Common myeloid progenitor, CD34-positive (primary cell): ENCODE measurements at regions of chr4 and their contacts with region 1.

Region 1: DNA sequence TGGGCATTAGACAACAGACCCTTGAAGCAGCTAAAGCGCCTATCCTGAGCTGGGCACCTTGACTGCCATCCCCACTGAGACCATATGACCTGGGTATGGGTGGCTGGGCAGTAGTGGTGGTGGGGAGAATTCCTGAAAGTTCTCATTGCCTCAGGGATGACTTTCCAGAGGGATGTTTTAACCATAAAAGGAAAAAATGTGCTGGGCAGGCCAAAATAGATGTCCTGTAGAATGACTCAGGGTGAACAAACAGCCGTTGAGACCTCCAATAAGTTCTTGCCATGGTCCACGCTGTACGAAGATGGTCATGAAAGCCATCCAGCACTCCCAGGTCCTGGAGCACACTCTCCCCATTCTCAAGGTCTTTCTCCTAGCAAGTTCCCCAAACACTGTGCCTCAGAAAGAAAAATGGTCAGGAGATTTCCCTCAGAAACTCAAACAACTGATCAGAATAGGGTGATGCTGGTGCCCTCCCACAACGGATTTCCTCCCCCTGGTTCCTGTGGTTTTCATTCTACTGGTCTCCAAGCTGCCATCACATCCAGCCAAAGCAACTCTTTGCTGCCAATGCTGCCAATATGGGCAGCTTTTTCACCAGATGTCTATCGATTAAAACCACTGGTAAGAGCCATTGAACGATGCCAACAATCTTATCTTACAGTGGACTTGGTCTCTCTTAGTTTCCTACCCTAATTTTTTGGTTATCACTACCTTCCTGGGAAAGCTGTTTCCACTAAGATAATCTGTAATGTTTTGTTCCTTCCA is 11.2 kb downstream of the CDKN2AIP start:
- DNase-seq: peak; percentile 78 to 93 (median 87)
- H3K4me3 ChIP-seq: peak overlapping the region in 5 of 7 experiments; percentile 21 to 48 (median 33)
- H3K27ac ChIP-seq: peak overlapping the region; percentile 46 to 63
- H3K4me1 ChIP-seq: peaks cover 0 to 31% (median 25%) of the 10 kb centered on the region in 4 experiments
- H3K27me3 ChIP-seq: no peaks in the 10 kb centered on the region

Region 2: DNA sequence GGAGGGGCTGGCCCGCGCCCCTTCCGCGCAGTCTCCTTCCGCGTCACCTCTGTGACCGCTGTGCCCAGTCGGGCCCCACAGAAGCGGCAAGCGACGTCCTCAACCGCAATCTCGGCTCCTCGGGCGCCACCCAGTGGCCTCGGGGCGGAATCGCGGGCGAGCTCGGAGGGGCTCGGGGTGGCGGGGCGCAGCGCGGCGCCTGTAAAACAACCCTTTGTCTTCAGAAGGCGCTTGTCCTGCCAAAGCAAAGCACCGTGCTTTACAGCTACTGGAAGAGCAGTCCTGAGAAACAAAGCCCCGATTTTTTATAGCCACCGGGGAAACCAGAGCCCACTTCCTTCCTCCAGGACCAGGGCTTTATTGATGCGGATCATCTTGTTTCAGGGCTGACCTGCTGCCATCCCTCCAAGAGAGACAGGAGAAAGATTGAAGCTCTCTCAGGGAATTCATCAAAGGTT is 48.5 kb before region 1 on chr4:
- CTCF ChIA-PET with region 1: no interaction called
- POLR2A ChIA-PET with region 1: no interaction called
- DNase-seq: peak; percentile 90 to 95 (median 94)
- H3K4me3 ChIP-seq: peak overlapping the region in 6 of 7 experiments; percentile 50 to 85 (median 66)
- H3K27ac ChIP-seq: peak overlapping the region; percentile 47 to 63
- H3K4me1 ChIP-seq: peaks cover 0 to 21% (median 14%) of the 10 kb centered on the region in 4 experiments
- H3K27me3 ChIP-seq: no peaks in the 10 kb centered on the region

Region 3: GRCh38 chr4:183444214-183445066 is 11.2 kb before region 1 on chr4 and contains the start of gene CDKN2AIP:
- CTCF ChIA-PET with region 1: interaction called, 19 read pairs
- POLR2A ChIA-PET with region 1: interaction called, 10 read pairs
- DNase-seq: peak; percentile 95 to 98 (median 97)
- H3K4me3 ChIP-seq: peak within 1 kb of the TSS; percentile 72 to 95 (median 85)
- H3K27ac ChIP-seq: peak within 1 kb of the TSS; percentile 89 to 96
- H3K4me1 ChIP-seq: peaks cover 24 to 44% (median 33%) of the 10 kb centered on the region in 4 experiments
- H3K27me3 ChIP-seq: no peaks in the 10 kb centered on the region

Region 4: GRCh38 chr4:183471946-183472708 is 16.5 kb after region 1 on chr4:
- CTCF ChIA-PET with region 1: no interaction called
- POLR2A ChIA-PET with region 1: no interaction called
- DNase-seq: peak; percentile 78 to 84 (median 79)
- H3K4me3 ChIP-seq: peak overlapping the region in 1 of 7 experiments; percentile 64
- H3K27ac ChIP-seq: no peak overlapping the region
- H3K4me1 ChIP-seq: peaks cover 0 to 9% (median 3%) of the 10 kb centered on the region in 4 experiments
- H3K27me3 ChIP-seq: no peaks in the 10 kb centered on the region